Psoas muscle (tissue), 8 donors: ENCODE measurements at regions of chr22 and their contacts with region 1.

Region 1: DNA sequence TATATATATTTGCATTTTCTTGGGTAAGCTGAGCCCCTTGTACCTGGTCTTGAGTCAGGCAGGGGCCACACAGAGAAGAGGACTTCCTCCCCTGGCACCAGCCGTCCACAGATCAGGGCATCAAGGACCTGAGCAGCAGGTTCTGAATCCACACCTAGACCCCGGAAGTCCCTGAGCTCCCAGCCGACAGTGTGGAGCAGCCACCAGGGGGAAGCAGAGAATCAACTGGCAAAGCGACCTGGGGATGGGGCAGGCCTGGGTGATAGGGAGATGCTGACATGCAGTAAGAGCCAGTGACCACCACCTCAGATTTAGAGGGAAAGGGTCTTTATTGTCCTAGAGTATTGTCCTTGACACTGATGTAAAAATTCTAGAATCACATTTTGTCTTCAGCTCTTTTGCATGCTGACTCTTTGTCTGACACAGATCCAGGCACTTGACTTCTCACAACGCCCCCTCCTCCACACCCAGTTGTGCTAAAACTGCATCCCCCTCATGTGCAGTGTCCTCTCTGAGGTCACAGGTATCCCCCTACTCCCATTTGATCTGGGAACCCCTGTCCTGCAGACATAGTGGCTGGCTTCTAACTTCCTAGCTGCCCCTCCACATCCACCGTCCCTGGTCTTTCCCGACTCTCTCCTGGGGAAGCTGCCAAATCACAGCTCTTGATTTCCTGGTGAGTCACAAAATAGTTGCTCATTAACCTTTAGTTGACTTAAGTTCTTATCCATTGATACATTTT is 109.3 kb downstream of the GGTLC2 start:
- DNase-seq: peak in 1 of 2 donors; percentile 31
- ATAC-seq: peak in 2 of 4 donors; percentile 50 to 55
- H3K4me3 ChIP-seq: no peak overlapping the region
- H3K27ac ChIP-seq: no peak overlapping the region
- H3K4me1 ChIP-seq: no peaks in the 10 kb centered on the region
- H3K27me3 ChIP-seq: peaks cover 0 to 3% (median 0%) of the 10 kb centered on the region in 3 donors
- CTCF ChIP-seq: no peak

Region 2: GRCh38 chr22:22692707-22693530 is 60.8 kb before region 1 on chr22:
- intact Hi-C with region 1: loop called in 1 of 2 experiments (anchors 10 kb)
- DNase-seq: no peak
- ATAC-seq: no peak
- H3K4me3 ChIP-seq: no peak overlapping the region
- H3K27ac ChIP-seq: no peak overlapping the region
- H3K4me1 ChIP-seq: no peaks in the 10 kb centered on the region
- H3K27me3 ChIP-seq: peaks cover 0 to 4% (median 0%) of the 10 kb centered on the region in 3 donors
- CTCF ChIP-seq: no peak